ENCODE measurements at regions of chr1 and their contacts with region 1.

Region 1: DNA sequence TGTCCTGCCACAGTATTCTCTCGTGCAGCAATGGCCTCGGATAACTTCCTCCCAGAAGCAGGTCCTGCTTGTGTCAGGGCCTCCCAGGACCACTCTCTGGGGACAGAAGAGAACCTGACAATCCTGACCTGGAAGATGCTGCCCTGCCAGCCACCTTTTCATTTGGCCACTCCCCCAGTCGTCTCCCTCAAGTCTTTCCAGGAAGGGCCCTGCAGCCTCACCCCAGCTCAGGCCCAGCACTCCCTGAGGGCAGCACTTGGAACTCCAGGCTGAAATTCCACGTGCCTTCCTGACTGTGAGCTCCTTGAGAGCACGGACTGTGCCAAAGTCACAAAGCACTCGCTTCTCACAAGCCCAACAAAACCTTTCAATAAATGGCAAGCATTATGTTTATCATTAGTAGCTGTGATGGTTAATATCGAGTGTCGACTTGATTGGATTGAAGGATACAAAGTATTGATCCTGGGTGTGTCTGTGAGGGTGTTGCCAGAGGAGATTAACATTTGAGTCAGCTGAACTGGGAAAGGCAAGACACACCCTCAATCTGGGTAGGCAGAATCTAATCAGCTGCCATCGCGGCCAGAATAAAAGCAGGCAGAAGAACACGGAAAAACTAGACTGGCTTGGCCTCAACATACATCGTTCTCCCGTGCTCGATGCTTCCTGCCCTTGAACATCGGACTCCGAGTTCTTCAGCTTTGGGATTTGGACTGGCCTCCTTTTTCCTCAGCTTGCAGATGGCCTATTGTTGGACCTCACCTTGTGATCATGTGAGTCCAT is 2.3 kb upstream of the CLEC20A start:
- DNase-seq: no peak
- H3K4me3 ChIP-seq: no peak overlapping the region
- CTCF ChIP-seq: no peak

Region 2: GRCh38 chr1:178407655-178408054 is 91.4 kb before region 1 on chr1:
- in situ Hi-C with region 1: loop called (anchors 5 kb)
- DNase-seq: no peak
- H3K4me3 ChIP-seq: no peak overlapping the region
- CTCF ChIP-seq: no peak

Region 3: DNA sequence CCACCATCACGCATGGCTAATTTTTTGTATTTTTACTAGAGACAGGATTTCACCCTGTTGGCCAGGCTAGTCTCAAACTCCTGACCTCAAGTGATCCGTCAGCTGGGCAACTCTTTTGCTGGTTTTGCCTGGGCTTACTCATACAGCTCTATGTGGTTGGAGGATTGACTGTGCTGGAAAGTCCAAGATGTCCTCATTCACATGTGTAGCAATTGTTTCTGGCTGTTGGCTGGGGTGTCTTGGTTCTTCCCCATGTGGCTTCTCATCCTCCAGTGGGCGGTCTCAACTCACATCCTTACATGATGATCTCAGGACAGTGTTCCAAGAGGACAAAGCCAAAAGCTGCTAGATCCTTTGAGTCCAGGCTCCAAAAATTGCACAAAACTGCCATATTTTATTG is 67.1 kb after region 1 on chr1:
- in situ Hi-C with region 1: no loop called
- DNase-seq: no peak
- H3K4me3 ChIP-seq: no peak overlapping the region
- CTCF ChIP-seq: no peak